ENCODE measurements at regions of chr2 and their contacts with region 1.

Region 1: DNA sequence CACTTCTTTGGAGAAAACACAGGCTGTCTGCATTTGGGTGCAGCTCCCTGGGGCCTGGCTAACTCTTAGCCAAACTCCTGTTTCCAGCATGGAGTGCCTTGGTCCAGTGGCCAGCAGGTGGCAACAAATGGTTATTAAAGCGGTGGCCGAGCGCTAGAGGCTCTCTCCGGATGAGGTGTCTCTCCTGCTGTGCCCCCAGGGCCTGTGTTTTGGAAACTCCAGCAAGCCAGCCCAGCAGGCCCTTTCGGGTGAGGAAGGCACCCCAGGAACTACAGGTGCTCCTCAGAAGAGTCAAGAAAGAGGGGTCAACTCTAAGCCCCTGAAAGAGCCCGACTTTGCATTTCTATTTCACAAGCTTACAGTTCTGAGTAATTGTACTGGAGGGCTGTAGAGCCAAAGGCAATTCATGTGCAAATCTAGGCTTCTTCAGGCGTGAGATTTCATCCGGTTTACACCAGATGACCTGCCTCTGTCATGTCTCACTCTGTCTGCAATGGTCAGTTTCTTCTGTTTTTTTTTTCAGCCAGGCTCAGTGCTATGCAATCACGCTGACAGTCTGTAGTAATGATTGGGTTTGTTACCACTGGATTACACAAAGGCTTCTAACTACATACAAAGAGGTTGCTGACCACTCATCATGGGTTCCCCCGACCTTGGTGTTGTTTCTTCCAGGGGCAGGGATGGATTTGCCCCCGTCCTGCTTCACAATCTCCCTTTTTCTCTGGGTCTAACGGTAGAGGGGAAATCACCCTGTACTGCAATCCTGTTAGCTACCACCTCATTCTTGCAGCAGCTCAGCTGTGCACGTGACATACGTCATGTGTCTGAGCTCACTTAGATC is 7.6 kb upstream of the CHRNA1 start:
- DNase-seq: no peak
- ATAC-seq: peak; percentile 97
- H3K4me3 ChIP-seq: no peak overlapping the region
- H3K27ac ChIP-seq: no peak overlapping the region
- H3K4me1 ChIP-seq: no peaks in the 10 kb centered on the region
- H3K27me3 ChIP-seq: peaks cover 0 to 1% of the 10 kb centered on the region in 2 experiments; a peak in 1 of 4 replicates
- CTCF ChIP-seq: peak; percentile 50 to 72 (median 70)
- EP300 ChIP-seq: no peak
- POLR2A ChIP-seq: no peak
- RAD21 ChIP-seq: peak; percentile 67

Region 2: DNA sequence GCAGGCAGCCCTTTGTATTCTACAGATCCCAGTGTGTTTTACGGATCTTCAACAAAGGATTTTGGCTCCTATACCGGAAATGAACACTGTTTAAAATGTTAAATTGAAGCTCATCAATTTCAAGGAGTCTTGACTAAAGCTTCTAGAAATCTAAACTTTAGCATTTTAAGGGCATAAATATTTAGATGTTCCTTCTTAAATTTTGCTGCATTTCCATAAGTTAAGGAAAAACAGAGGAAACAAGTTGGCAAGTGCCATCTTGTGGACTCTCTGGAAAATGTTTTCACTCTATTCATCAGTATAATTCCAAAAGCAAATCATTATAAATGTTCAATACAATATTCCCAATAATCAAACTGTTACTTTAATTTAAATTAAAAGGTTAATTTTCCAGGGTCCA is 213.8 kb after region 1 on chr2:
- CTCF ChIA-PET with region 1: interaction called, 30 read pairs
- POLR2A ChIA-PET with region 1: no interaction called
- RAD21 ChIA-PET with region 1: interaction called, 12 read pairs
- SMC1A ChIA-PET with region 1: interaction called, 16 read pairs
- in situ Hi-C with region 1: no loop called
- intact Hi-C with region 1: loop called (anchors 1 kb)
- DNase-seq: no peak
- ATAC-seq: no peak
- H3K4me3 ChIP-seq: no peak overlapping the region
- H3K27ac ChIP-seq: no peak overlapping the region
- H3K4me1 ChIP-seq: no peaks in the 10 kb centered on the region
- H3K27me3 ChIP-seq: no peaks in the 10 kb centered on the region
- CTCF ChIP-seq: peak in 1 of 3 experiments; percentile 13; a peak in 2 of 6 replicates
- EP300 ChIP-seq: no peak
- POLR2A ChIP-seq: no peak
- RAD21 ChIP-seq: 0 out of 2 replicates have a peak, but pooled peaks have one; percentile 8

Measured in GM12878 (cell line).